CD4-positive, alpha-beta memory T cell (primary cell): ENCODE measurements at regions of chr16 and their contacts with region 1.

Region 1: GRCh38 chr16:1971796-1972489 is at the start of gene TBL3:
- DNase-seq: peak; percentile 97 to 98 (median 97)
- H3K4me3 ChIP-seq: peak within 1 kb of the TSS; percentile 55 to 73
- H3K4me3 Mint-ChIP-seq: peak within 1 kb of the TSS; percentile 94 to 99 (median 96)
- H3K27ac ChIP-seq: peak within 1 kb of the TSS; percentile 70
- H3K27ac Mint-ChIP-seq: peak within 1 kb of the TSS; percentile 89 to 99 (median 97)
- H3K4me1 ChIP-seq: peaks cover 27% of the 10 kb centered on the region
- H3K4me1 Mint-ChIP-seq: peaks cover 8 to 22% (median 16%) of the 10 kb centered on the region in 4 donors
- H3K27me3 ChIP-seq: no peaks in the 10 kb centered on the region
- H3K27me3 Mint-ChIP-seq: peaks cover 0 to 5% of the 10 kb centered on the region in 2 donors
- total RNA-seq, gene TBL3: 33.2 to 35.0 TPM

Region 2: GRCh38 chr16:636206-637080 is 1335.5 kb before region 1 on chr16 and contains the start of gene METTL26:
- CTCF ChIA-PET with region 1: no interaction called
- POLR2A ChIA-PET with region 1: no interaction called
- intact Hi-C with region 1: loop called (anchors 5 kb)
- DNase-seq: peak; percentile 92 to 95 (median 93)
- H3K4me3 ChIP-seq: peak within 1 kb of the TSS; percentile 81 to 86
- H3K4me3 Mint-ChIP-seq: peak within 1 kb of the TSS; percentile 95 to 100 (median 98)
- H3K27ac ChIP-seq: peak within 1 kb of the TSS; percentile 76
- H3K27ac Mint-ChIP-seq: peak within 1 kb of the TSS; percentile 94 to 100 (median 99)
- H3K4me1 ChIP-seq: peaks cover 21% of the 10 kb centered on the region
- H3K4me1 Mint-ChIP-seq: peaks cover 0 to 10% (median 5%) of the 10 kb centered on the region in 4 donors
- H3K27me3 ChIP-seq: no peaks in the 10 kb centered on the region
- H3K27me3 Mint-ChIP-seq: peaks cover 0 to 3% of the 10 kb centered on the region in 2 donors
- total RNA-seq, gene METTL26: 68.4 to 74.1 TPM

Region 3: DNA sequence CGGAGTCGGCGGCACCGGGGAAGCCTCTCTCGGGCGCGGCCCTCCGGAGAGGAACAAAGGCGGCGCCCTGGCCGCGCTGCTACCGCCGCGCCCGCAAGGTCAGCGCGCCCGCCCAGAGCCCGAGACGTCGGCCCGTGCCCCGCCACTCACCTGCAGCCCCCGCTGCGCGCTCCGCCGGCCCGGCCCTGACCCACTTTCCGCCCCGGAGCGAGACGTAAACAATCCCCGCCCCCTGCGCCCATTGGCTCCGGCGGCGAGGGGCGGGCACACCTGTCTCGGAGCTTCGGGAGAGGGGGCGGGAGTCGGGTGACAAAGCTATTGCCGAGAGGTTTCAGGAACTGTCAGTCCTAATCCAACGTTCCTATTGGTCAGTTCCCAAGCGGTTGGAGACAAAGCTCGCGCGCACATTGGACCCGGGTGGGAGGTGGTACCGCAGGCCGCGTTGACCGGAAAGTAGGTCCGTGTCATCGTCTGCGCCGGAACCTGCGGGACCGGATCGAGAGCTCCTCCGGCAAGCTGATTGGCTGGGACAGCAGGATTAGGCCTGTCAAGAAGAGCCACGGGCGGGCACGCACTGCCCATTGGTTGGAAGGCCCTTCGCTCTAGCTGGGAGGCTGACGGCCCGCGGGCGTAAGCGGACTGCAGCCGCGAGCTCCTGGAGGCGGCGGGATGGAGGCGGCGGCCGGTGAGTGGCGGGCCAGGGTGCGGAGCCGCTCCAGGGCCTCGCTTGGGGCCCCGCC is 189.4 kb before region 1 on chr16 and contains the starts of genes NUBP2 and SPSB3:
- CTCF ChIA-PET with region 1: no interaction called
- POLR2A ChIA-PET with region 1: interaction called, 17 read pairs
- intact Hi-C with region 1: no loop called
- DNase-seq: peak; percentile 97 to 99 (median 99)
- H3K4me3 ChIP-seq: peak within 1 kb of the TSS; percentile 69 to 88
- H3K4me3 Mint-ChIP-seq: peak within 1 kb of the TSS; percentile 91 to 96 (median 94)
- H3K27ac ChIP-seq: peak within 1 kb of the TSS; percentile 79
- H3K27ac Mint-ChIP-seq: peak within 1 kb of the TSS; percentile 92 to 97 (median 94)
- H3K4me1 ChIP-seq: peaks cover 43% of the 10 kb centered on the region
- H3K4me1 Mint-ChIP-seq: peaks cover 13 to 46% (median 30%) of the 10 kb centered on the region in 4 donors
- H3K27me3 ChIP-seq: no peaks in the 10 kb centered on the region
- H3K27me3 Mint-ChIP-seq: no peaks in the 10 kb centered on the region
- total RNA-seq, gene NUBP2: 55.9 to 59.4 TPM
- total RNA-seq, gene SPSB3: 133 to 144 TPM

Region 4: DNA sequence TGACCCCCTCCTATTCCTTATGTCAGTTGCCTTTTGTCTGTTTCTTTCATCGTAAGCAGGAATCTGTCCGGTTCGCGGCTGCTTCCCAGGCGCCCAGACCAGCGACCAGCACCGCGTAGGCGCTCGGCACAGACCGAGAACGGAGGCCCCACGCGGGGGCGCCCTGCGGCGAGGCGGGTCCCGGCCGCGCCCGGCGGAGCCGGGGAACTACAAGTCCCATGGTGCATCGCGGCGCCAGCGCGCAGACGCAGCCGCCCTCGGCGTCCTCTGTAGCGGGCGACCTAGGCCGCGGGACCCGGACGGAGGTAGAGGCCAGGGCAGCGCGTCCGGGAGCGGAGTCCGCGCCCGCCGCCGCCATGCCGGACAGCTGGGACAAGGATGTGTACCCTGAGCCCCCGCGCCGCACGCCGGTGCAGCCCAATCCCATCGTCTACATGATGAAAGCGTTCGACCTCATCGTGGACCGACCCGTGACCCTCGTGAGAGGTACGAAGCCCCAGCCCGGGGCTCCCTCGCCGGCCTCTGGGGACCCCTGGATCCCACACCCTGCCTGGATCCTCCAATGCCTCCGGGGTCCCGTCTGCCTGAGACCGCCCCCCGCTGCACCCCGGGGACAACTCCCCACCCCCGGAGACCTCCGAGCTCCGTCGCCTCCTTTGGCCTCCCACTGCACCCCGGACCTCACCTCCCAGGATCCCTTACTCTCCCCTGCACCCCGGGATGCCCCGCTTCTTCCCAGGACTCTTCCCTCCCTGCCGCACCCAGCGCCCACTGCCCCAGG is 12.5 kb before region 1 on chr16 and contains the start of gene NDUFB10:
- CTCF ChIA-PET with region 1: interaction called, 18 read pairs
- POLR2A ChIA-PET with region 1: interaction called, 84 read pairs
- intact Hi-C with region 1: loop called (anchors 1 kb)
- DNase-seq: peak; percentile 84 to 90 (median 87)
- H3K4me3 ChIP-seq: peak within 1 kb of the TSS; percentile 69 to 89
- H3K4me3 Mint-ChIP-seq: peak within 1 kb of the TSS; percentile 88 to 94 (median 92)
- H3K27ac ChIP-seq: peak within 1 kb of the TSS; percentile 78
- H3K27ac Mint-ChIP-seq: peak within 1 kb of the TSS; percentile 86 to 99 (median 95)
- H3K4me1 ChIP-seq: peaks cover 47% of the 10 kb centered on the region
- H3K4me1 Mint-ChIP-seq: peaks cover 26 to 53% (median 40%) of the 10 kb centered on the region in 4 donors
- H3K27me3 ChIP-seq: no peaks in the 10 kb centered on the region
- H3K27me3 Mint-ChIP-seq: no peaks in the 10 kb centered on the region
- total RNA-seq, gene NDUFB10: 76.5 to 86.2 TPM

Region 5: GRCh38 chr16:1983544-1984346 is 11.8 kb after region 1 on chr16 and contains the start of gene GFER:
- CTCF ChIA-PET with region 1: interaction called, 5 read pairs
- POLR2A ChIA-PET with region 1: interaction called, 99 read pairs
- intact Hi-C with region 1: no loop called
- DNase-seq: peak; percentile 47 to 70 (median 63)
- H3K4me3 ChIP-seq: peak within 1 kb of the TSS; percentile 52 to 64
- H3K4me3 Mint-ChIP-seq: peak within 1 kb of the TSS; percentile 78 to 89 (median 86)
- H3K27ac ChIP-seq: peak within 1 kb of the TSS; percentile 57
- H3K27ac Mint-ChIP-seq: peak within 1 kb of the TSS; percentile 57 to 91 (median 86)
- H3K4me1 ChIP-seq: peaks cover 22% of the 10 kb centered on the region
- H3K4me1 Mint-ChIP-seq: peaks cover 4 to 22% (median 15%) of the 10 kb centered on the region in 4 donors
- H3K27me3 ChIP-seq: peaks cover 20% of the 10 kb centered on the region
- H3K27me3 Mint-ChIP-seq: peaks cover 11 to 14% of the 10 kb centered on the region in 2 donors
- total RNA-seq, gene GFER: 19.6 to 22.6 TPM

Region 6: DNA sequence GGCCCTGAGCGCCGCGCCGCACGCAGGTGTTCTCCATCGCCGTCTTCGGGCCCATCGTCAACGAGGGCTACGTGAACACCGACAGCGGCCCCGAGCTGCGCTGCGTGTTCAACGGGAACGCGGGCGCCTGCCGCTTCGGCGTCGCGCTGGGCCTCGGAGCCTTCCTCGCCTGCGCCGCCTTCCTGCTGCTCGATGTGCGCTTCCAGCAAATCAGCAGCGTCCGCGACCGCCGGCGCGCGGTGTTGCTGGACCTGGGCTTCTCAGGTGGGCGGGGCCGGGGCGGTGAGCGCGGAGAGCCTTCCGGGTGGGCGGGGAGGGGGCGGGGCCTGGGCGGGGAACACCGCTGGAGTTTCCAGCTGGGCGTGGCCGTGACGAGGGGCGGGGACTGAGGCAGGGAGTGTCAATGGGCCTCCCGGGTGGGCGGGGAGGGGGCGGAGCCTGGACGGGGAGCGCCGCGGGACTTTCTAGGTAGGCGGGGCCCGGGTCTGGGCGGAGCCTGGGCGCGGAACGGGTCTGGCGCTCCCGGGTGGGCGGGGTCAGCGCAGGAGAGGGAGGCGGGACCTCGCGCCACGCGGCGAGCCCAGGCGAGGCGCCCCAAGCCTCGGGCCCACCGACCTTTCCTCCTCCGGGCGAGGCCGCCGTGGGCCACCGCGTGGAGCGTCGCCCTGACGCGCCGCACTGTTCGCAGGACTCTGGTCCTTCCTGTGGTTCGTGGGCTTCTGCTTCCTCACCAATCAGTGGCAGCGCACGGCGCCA is 20.2 kb after region 1 on chr16:
- CTCF ChIA-PET with region 1: no interaction called
- POLR2A ChIA-PET with region 1: interaction called, 99 read pairs
- intact Hi-C with region 1: loop called (anchors 2 kb)
- DNase-seq: peak; percentile 92 to 99 (median 93)
- H3K4me3 ChIP-seq: peak overlapping the region in 1 of 2 donors; percentile 42
- H3K4me3 Mint-ChIP-seq: peak overlapping the region in 7 of 8 donors; percentile 40 to 84 (median 73)
- H3K27ac ChIP-seq: peak overlapping the region; percentile 61
- H3K27ac Mint-ChIP-seq: peak overlapping the region in 6 of 7 donors; percentile 62 to 88 (median 78)
- H3K4me1 ChIP-seq: peaks cover 22% of the 10 kb centered on the region
- H3K4me1 Mint-ChIP-seq: peaks cover 6 to 30% (median 16%) of the 10 kb centered on the region in 4 donors
- H3K27me3 ChIP-seq: no peaks in the 10 kb centered on the region
- H3K27me3 Mint-ChIP-seq: peaks cover 6 to 7% of the 10 kb centered on the region in 2 donors

Region 7: DNA sequence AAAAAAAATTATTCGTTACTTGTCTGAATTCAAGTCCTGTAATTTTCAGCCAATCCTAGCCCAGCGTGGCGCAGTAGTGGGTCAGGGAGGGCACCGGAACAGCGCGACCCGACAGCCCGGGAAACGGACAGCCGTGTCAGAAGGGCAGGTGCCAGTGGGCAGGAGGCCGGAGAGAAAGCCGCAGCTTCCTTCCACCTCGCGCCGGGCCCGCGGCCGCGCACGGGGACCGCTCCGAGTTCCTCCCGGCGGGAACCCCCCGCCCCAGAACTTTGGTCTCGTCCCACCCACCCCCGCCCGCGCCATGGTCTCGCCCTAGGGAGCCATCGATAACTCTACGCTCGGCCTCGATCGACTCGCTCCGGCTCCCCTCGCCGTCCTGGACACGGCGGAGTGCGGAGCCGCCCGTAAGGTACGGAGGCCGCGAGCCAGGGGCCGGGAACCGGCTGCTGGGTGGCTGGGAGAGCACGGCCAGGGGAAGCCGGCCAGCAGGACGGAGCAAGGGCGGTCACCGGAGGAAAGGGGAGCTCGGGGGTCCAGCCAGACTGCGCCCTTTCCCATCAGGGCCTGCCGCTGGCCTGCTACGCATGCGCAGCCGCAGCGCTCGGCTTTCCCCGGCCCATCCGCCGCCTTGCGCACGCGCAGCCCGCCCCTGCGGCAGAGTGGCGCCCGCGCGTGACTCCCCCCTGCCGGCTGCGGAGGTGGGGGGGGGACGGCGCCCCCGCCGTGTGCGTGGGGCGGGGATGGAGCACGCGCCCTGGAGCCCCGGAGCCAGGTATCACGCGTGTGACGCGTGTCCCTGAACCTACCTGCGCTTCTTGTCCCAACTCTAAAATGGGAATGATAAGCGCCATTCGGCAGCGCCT is 233.4 kb after region 1 on chr16 and contains the start of gene MLST8:
- CTCF ChIA-PET with region 1: no interaction called
- POLR2A ChIA-PET with region 1: interaction called, 4 read pairs
- intact Hi-C with region 1: loop called (anchors 5 kb)
- DNase-seq: peak; percentile 87 to 99 (median 97)
- H3K4me3 ChIP-seq: peak within 1 kb of the TSS; percentile 88 to 89
- H3K4me3 Mint-ChIP-seq: peak within 1 kb of the TSS; percentile 79 to 88 (median 84)
- H3K27ac ChIP-seq: peak within 1 kb of the TSS; percentile 90
- H3K27ac Mint-ChIP-seq: peak within 1 kb of the TSS; percentile 69 to 95 (median 89)
- H3K4me1 ChIP-seq: peaks cover 26% of the 10 kb centered on the region
- H3K4me1 Mint-ChIP-seq: peaks cover 12 to 29% (median 18%) of the 10 kb centered on the region in 4 donors
- H3K27me3 ChIP-seq: no peaks in the 10 kb centered on the region
- H3K27me3 Mint-ChIP-seq: peaks cover 0 to under 1% of the 10 kb centered on the region in 2 donors
- total RNA-seq, gene MLST8: 28.1 to 31.1 TPM